CD14-positive monocyte (primary cell): ENCODE measurements at regions of chr18 and their contacts with region 1.

Region 1: GRCh38 chr18:68520406-68521075 is 194.4 kb downstream of the TMX3 start:
- DNase-seq: no peak
- H3K4me3 ChIP-seq: no peak overlapping the region
- H3K4me3 Mint-ChIP-seq: no peak overlapping the region
- H3K27ac ChIP-seq: no peak overlapping the region
- H3K27ac Mint-ChIP-seq: no peak overlapping the region
- H3K4me1 ChIP-seq: no peaks in the 10 kb centered on the region
- H3K4me1 Mint-ChIP-seq: no peaks in the 10 kb centered on the region
- H3K27me3 ChIP-seq: no peaks in the 10 kb centered on the region
- H3K27me3 Mint-ChIP-seq: no peaks in the 10 kb centered on the region
- CTCF ChIP-seq: no peak

Region 2: GRCh38 chr18:68588169-68588568 is 67.6 kb after region 1 on chr18:
- intact Hi-C with region 1: loop called in 1 of 2 experiments (anchors 10 kb)
- DNase-seq: no peak
- H3K4me3 ChIP-seq: no peak overlapping the region
- H3K4me3 Mint-ChIP-seq: no peak overlapping the region
- H3K27ac ChIP-seq: no peak overlapping the region
- H3K27ac Mint-ChIP-seq: no peak overlapping the region
- H3K4me1 ChIP-seq: no peaks in the 10 kb centered on the region
- H3K4me1 Mint-ChIP-seq: no peaks in the 10 kb centered on the region
- H3K27me3 ChIP-seq: no peaks in the 10 kb centered on the region
- H3K27me3 Mint-ChIP-seq: peaks cover 0 to 3% (median 0%) of the 10 kb centered on the region in 3 donors
- CTCF ChIP-seq: no peak